ENCODE measurements at regions of chr12 and their contacts with region 1.

Region 1: DNA sequence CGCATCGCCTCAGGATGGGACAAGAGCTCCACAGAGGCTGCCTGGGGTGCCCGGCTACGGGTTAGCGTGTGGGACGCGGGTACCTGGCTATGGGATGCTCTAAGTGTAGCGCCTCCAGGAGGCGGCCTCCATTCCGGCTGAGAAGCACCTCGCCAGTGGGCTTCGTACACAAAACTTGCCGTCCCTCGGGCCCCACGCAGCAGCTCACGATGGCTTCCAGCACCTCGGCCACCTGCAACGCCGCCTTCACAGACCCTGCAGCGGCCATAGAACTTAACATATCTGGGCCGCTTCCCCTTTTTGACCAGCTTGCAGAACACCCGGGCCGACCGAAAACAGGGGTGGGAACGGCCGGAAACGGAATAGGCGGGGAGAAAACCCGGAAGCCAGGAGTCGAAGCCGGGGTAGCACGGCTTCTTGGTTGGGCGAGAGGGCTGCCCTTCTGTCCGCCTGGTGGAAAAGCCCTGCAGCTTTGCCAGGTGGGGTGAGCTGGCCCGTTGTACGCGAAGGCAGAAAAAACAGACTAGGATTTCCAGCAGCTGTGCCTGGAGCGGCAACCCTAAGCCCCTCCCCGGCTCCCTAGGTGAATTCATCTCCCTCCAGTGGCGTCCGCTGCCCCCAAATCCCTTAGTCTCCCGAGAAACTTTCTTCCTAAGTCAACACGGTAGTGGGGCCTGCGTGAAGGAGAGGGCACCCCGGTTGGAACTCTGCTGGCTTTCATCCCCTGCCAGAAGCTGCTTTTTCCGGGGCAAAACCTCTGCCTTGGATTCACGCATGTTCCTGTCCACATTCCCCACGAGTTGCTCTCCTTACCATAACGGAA is at the start of gene BBS10:
- DNase-seq: peak; percentile 96
- H3K4me3 ChIP-seq: peak within 1 kb of the TSS; percentile 74
- H3K27ac ChIP-seq: peak within 1 kb of the TSS; percentile 76
- H3K4me1 ChIP-seq: peaks cover 16% of the 10 kb centered on the region
- CTCF ChIP-seq: peak; percentile 60
- total RNA-seq, gene BBS10: 5.8 and 6.2 TPM in 2 replicates

Region 2: GRCh38 chr12:75480469-75480949 is 867.8 kb before region 1 on chr12 and contains the start of gene GLIPR1:
- CTCF ChIA-PET with region 1: no interaction called
- POLR2A ChIA-PET with region 1: no interaction called
- intact Hi-C with region 1: loop called (anchors 5 kb)
- DNase-seq: peak; percentile 56
- H3K4me3 ChIP-seq: peak within 1 kb of the TSS; percentile 64
- H3K27ac ChIP-seq: peak within 1 kb of the TSS; percentile 62
- H3K4me1 ChIP-seq: peaks cover 64% of the 10 kb centered on the region
- CTCF ChIP-seq: no peak
- total RNA-seq, gene GLIPR1: 2.8 and 3.4 TPM in 2 replicates

Region 3: DNA sequence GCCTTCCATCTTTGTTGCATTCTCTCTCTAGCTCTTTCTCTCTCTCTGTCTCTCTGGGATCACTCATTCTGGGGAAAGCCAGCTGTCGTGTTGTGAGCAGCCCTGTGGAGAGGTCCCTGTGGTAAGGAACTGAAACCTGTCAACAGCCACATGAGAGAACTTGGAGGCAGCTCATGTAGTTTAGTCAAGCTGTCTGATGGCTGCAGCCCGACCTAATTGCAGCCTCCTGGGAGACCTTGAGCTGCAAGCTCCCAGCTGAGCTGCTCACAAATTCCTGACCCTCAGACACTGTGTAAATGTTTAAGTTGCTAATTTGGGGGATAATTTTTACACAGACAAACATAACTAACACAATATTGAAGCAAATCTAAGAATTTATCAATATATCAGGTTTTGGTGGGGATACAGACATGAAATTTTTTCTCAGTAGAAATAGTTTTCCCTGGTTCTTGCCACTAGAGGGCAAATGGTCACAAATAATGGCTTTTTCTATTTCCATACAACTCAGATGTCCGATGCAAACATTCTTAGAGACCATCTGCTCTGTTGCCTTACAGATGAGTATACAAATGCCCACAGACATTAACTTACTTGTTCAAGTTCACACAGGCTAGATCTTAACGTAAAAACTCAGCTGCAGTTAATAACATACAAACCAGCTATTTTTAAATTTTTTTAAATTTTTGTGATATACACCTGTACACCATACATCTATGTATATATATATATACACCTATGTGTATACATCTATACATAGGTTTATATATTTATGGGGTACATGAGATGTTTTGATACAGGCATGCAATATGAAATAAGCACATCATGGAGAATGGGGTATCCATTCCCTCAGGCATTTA is 821.4 kb before region 1 on chr12:
- CTCF ChIA-PET with region 1: no interaction called
- POLR2A ChIA-PET with region 1: no interaction called
- intact Hi-C with region 1: loop called (anchors 5 kb)
- DNase-seq: peak; percentile 86
- H3K4me3 ChIP-seq: peak overlapping the region; percentile 17
- H3K27ac ChIP-seq: peak overlapping the region; percentile 20
- H3K4me1 ChIP-seq: peaks cover 30% of the 10 kb centered on the region
- CTCF ChIP-seq: peak; percentile 96

Region 4: GRCh38 chr12:76010732-76011458 is 337.4 kb before region 1 on chr12:
- CTCF ChIA-PET with region 1: no interaction called
- POLR2A ChIA-PET with region 1: no interaction called
- intact Hi-C with region 1: no loop called
- DNase-seq: no peak
- H3K4me3 ChIP-seq: no peak overlapping the region
- H3K27ac ChIP-seq: no peak overlapping the region
- H3K4me1 ChIP-seq: no peaks in the 10 kb centered on the region
- CTCF ChIP-seq: no peak

Region 5: DNA sequence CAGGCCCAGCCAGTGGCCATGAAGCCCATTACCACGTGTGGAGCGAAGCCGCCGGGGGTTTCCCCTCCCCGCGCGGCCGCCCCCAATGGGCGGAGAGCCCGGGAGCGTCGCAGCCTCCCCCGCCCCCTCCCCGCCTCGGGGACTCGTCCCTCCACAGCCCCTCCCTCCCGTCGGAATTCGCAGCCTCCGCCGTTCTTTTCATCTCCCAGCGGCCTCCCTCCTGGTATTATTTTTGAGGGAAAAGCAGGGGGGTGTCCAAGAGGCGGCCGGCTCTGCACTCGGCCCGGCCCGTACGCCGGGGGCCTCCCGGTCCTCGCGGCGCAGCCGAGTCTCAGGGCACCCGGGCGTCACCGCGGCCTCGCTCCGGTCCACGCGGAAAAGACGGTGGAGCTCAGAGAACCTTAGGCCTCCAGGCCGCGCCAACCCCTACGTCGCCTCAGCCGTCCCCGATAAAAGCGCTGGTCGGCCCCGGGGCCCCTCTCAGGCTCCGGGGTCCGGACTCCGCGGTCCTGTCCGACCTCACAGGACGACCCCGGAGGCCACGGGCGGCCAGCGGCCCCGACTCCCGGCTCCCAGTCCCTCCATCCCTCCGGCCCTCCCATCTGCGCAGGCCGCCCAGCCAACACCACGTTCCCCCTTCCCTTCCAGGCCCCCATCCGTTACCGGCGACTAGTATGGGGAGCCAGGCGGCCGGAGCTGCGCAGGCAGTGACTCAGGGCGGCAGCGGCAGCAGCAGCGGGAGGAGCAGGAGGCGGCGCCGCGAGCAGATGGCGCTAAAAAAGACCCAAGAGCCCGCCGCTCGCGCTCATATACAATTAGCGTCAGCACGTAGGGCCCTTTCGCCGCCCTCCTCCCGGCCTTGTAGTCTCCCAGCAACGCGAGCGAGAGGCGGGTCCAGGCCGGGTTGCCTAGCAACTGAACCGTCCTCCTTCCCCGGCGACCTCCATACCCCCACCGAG is 264.1 kb before region 1 on chr12 and contains the start of gene NAP1L1:
- CTCF ChIA-PET with region 1: no interaction called
- POLR2A ChIA-PET with region 1: interaction called, 6 read pairs
- intact Hi-C with region 1: loop called (anchors 1 kb)
- DNase-seq: peak; percentile 99
- H3K4me3 ChIP-seq: peak within 1 kb of the TSS; percentile 90
- H3K27ac ChIP-seq: peak within 1 kb of the TSS; percentile 88
- H3K4me1 ChIP-seq: peaks cover 44% of the 10 kb centered on the region
- CTCF ChIP-seq: no peak
- total RNA-seq, gene NAP1L1: 348 and 487 TPM in 2 replicates

Region 6: GRCh38 chr12:76206677-76207072 is 141.6 kb before region 1 on chr12:
- CTCF ChIA-PET with region 1: no interaction called
- POLR2A ChIA-PET with region 1: no interaction called
- intact Hi-C with region 1: no loop called
- DNase-seq: no peak
- H3K4me3 ChIP-seq: no peak overlapping the region
- H3K27ac ChIP-seq: no peak overlapping the region
- H3K4me1 ChIP-seq: no peaks in the 10 kb centered on the region
- CTCF ChIP-seq: no peak

Region 7: DNA sequence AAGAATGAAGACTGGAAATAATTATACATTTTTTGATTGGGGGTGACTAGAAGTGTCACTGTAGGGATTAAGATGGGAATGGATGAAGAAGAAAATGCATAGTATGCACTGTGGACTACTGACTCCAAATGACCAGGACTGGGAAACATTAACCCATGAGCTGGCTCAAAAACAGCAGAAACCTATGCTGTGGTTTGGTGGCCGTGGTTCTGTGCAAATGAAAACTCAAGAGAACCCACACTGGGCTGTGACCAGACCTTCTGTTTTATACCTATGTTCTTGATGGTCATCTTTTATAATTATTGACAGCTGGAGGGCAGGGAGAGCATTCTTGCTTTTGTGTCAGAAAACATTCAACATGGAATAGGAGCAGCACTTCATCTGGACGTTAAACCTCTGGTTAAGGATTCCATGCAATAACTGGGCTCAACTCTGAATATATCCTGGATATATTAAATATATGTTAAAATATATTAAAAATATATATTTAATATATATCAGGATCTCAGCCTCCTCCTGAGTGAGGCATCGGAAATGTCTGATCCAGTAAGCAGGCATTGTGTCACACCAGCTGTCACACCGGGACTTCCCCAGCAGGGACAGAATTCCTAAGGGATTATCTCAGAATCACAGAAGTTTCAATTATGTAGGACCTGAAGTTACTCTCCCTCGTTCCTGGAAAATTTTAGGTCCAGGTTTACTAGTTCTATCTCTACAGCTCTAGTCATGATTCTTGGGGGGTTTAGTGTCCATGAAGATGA is 48.6 kb before region 1 on chr12:
- CTCF ChIA-PET with region 1: no interaction called
- POLR2A ChIA-PET with region 1: no interaction called
- intact Hi-C with region 1: no loop called
- DNase-seq: no peak
- H3K4me3 ChIP-seq: no peak overlapping the region
- H3K27ac ChIP-seq: no peak overlapping the region
- H3K4me1 ChIP-seq: no peaks in the 10 kb centered on the region
- CTCF ChIP-seq: no peak

Region 8: GRCh38 chr12:76559400-76560085 is 211.3 kb after region 1 on chr12 and contains the start of gene OSBPL8:
- CTCF ChIA-PET with region 1: no interaction called
- POLR2A ChIA-PET with region 1: interaction called, 3 read pairs
- intact Hi-C with region 1: loop called (anchors 2 kb)
- DNase-seq: peak; percentile 93
- H3K4me3 ChIP-seq: peak within 1 kb of the TSS; percentile 100
- H3K27ac ChIP-seq: peak within 1 kb of the TSS; percentile 66
- H3K4me1 ChIP-seq: peaks cover 40% of the 10 kb centered on the region
- CTCF ChIP-seq: peak; percentile 38; the same call in 1 of the 2 replicates
- total RNA-seq, gene OSBPL8: 25.0 and 34.0 TPM in 2 replicates

Region 9: GRCh38 chr12:76763743-76764675 is 415.7 kb after region 1 on chr12 and contains the start of gene ZDHHC17:
- CTCF ChIA-PET with region 1: no interaction called
- POLR2A ChIA-PET with region 1: no interaction called
- intact Hi-C with region 1: loop called (anchors 10 kb)
- DNase-seq: peak; percentile 91
- H3K4me3 ChIP-seq: peak within 1 kb of the TSS; percentile 94
- H3K27ac ChIP-seq: peak within 1 kb of the TSS; percentile 77
- H3K4me1 ChIP-seq: peaks cover 17% of the 10 kb centered on the region
- CTCF ChIP-seq: no peak
- total RNA-seq, gene ZDHHC17: 24.0 and 27.4 TPM in 2 replicates

Measured in OCI-LY7 (cell line).